Activated CD4-positive, alpha-beta T cell treated with anti-CD3 and anti-CD28 coated beads, Interleukin-2, amount 10 ng/mL, durations not matched to agents 24 days and 14 days (primary cell): ENCODE measurements at regions of chr5 and their contacts with region 1.

Region 1: DNA sequence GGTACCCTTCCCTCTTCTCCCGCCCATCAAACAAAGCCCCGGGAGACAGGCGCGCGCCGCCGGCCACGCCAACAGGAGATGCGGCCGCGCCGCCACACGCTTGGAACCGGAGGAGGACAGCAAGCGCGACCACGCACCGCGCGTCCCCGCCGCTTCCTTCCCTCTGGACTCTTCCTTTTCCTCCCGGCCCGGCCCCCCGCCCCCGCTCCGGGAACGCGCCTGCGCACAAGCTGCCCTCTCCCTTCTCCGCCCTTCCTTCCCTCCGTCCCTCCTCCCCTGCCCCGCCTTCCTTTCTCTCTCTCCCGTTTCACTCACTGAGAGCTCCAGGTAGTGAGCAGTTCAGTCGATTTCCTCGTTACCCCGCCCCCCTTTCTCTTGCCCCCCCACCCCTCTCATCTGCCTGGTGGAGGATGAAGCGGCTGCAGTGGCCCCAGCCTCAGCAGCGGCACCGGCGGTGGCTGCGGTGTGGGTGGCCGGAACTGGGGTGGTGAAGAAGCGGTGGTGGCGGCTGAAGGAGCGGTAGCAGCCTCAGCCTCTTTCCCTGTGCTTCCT is at the start of gene RASA1:
- DNase-seq: peak; percentile 94
- H3K4me3 Mint-ChIP-seq: peak within 1 kb of the TSS; percentile 96
- H3K27ac Mint-ChIP-seq: peak within 1 kb of the TSS; percentile 99
- H3K4me1 Mint-ChIP-seq: peaks cover 27% of the 10 kb centered on the region
- H3K27me3 Mint-ChIP-seq: peaks cover 5% of the 10 kb centered on the region
- total RNA-seq, gene RASA1: 20.6 and 21.2 TPM in 2 replicates

Region 2: GRCh38 chr5:87020099-87020934 is 247.3 kb before region 1 on chr5:
- intact Hi-C with region 1: loop called (anchors 5 kb)
- DNase-seq: peak; percentile 81
- H3K4me3 Mint-ChIP-seq: peak overlapping the region; percentile 0
- H3K27ac Mint-ChIP-seq: no peak overlapping the region
- H3K4me1 Mint-ChIP-seq: peaks cover 10% of the 10 kb centered on the region
- H3K27me3 Mint-ChIP-seq: peaks cover 6% of the 10 kb centered on the region

Region 3: GRCh38 chr5:87121304-87122150 is 146.1 kb before region 1 on chr5:
- intact Hi-C with region 1: loop called (anchors 2 kb)
- DNase-seq: peak; percentile 82
- H3K4me3 Mint-ChIP-seq: peak overlapping the region; percentile 48
- H3K27ac Mint-ChIP-seq: peak overlapping the region; percentile 86
- H3K4me1 Mint-ChIP-seq: peaks cover 50% of the 10 kb centered on the region
- H3K27me3 Mint-ChIP-seq: no peaks in the 10 kb centered on the region

Region 4: GRCh38 chr5:87282269-87282668 is 14.6 kb after region 1 on chr5:
- intact Hi-C with region 1: loop called (anchors 1 kb)
- DNase-seq: no peak
- H3K4me3 Mint-ChIP-seq: peak overlapping the region; percentile 78
- H3K27ac Mint-ChIP-seq: peak overlapping the region; percentile 72
- H3K4me1 Mint-ChIP-seq: peaks cover 25% of the 10 kb centered on the region
- H3K27me3 Mint-ChIP-seq: no peaks in the 10 kb centered on the region

Region 5: DNA sequence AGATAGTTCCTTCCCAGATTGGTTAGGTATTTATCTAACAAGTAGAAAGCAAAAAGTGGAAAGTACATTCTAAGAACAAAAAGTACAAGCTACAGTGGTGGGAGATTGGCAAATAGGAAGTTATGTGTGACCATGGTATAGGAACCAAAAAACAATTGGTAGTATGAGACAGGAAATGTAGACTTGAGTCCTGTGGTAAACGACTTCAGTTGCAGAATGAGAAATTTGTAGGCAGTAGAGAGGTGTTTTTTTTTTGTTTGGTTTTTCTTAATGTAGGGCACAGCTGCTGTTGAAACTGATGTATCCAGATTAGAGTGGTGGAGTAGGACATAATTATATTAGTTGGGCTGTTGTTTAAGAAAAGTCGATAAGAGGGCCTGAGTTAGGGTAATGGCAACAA is 73.1 kb after region 1 on chr5:
- intact Hi-C with region 1: loop called (anchors 1 kb)
- DNase-seq: peak; percentile 69
- H3K4me3 Mint-ChIP-seq: peak overlapping the region; percentile 70
- H3K27ac Mint-ChIP-seq: peak overlapping the region; percentile 67
- H3K4me1 Mint-ChIP-seq: peaks cover 17% of the 10 kb centered on the region
- H3K27me3 Mint-ChIP-seq: no peaks in the 10 kb centered on the region

Region 6: DNA sequence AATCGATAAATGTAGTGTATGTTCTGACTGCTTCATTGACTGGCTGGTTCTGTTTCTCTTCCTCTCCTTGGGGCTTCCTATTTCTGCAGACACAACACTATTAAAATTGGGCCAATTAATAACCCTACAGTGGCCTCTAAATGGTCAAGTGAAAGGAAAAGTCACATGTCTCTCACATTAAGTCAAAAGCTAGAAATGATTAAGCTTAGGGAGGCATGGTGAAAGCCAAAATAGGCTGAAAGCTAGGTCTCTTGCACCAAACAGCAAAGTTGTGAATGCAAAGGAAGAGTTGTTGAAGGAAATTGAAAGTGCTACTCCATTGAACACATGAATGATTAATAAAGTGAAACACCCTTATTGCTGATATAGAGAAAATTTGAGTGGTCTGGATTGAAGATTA is 86.8 kb after region 1 on chr5:
- intact Hi-C with region 1: no loop called
- DNase-seq: no peak
- H3K4me3 Mint-ChIP-seq: no peak overlapping the region
- H3K27ac Mint-ChIP-seq: no peak overlapping the region
- H3K4me1 Mint-ChIP-seq: peaks cover 14% of the 10 kb centered on the region
- H3K27me3 Mint-ChIP-seq: no peaks in the 10 kb centered on the region